ENCODE measurements at regions of chr14 and their contacts with region 1.

Region 1: DNA sequence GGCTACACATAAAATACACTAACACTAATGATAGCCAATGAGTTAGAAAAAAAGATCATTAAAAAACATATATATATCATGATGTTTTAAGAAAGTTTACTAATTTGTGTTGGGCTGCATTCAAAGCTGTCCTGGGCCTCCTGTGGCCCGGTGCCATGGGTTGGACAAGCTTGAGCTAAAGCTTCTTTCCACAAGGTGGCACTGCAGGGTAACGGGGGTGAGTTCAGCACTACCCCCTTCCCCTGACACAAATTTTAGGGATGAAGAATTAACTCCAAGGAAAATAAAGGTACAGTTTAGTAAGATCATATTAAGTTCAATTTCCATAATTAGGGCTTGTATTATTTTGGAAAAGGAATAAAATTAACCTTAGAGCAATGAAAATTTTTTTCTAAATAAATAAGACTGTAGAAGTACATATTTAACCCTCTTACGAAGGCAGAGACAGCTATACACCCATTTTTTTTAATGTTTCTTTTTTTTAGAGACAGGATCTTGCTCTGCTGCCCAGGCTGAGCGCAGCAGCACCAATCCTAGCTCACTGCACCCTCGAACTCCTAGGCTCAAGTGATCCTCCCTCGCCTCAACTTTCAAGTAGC is 38.9 kb downstream of the PPP1R13B start:
- DNase-seq: peak; percentile 28 to 80 (median 73)
- ATAC-seq: peak; percentile 78
- H3K4me3 ChIP-seq: no peak overlapping the region
- H3K4me3 Mint-ChIP-seq: no peak overlapping the region
- H3K27ac ChIP-seq: no peak overlapping the region
- H3K27ac Mint-ChIP-seq: no peak overlapping the region
- H3K4me1 ChIP-seq: no peaks in the 10 kb centered on the region
- H3K4me1 Mint-ChIP-seq: peaks cover 15% of the 10 kb centered on the region
- H3K27me3 ChIP-seq: no peaks in the 10 kb centered on the region
- H3K27me3 Mint-ChIP-seq: no peaks in the 10 kb centered on the region
- CTCF ChIP-seq: peak; percentile 96

Region 2: GRCh38 chr14:103770902-103771301 is 37.6 kb before region 1 on chr14:
- CTCF ChIA-PET with region 1: no interaction called
- POLR2A ChIA-PET with region 1: no interaction called
- intact Hi-C with region 1: no loop called
- DNase-seq: no peak
- ATAC-seq: no peak
- H3K4me3 ChIP-seq: no peak overlapping the region
- H3K4me3 Mint-ChIP-seq: no peak overlapping the region
- H3K27ac ChIP-seq: no peak overlapping the region
- H3K27ac Mint-ChIP-seq: no peak overlapping the region
- H3K4me1 ChIP-seq: no peaks in the 10 kb centered on the region
- H3K4me1 Mint-ChIP-seq: no peaks in the 10 kb centered on the region
- H3K27me3 ChIP-seq: no peaks in the 10 kb centered on the region
- H3K27me3 Mint-ChIP-seq: no peaks in the 10 kb centered on the region
- CTCF ChIP-seq: no peak

Region 3: GRCh38 chr14:103782376-103782775 is 26.1 kb before region 1 on chr14:
- CTCF ChIA-PET with region 1: no interaction called
- POLR2A ChIA-PET with region 1: no interaction called
- intact Hi-C with region 1: loop called in 1 of 2 experiments (anchors 1 kb)
- DNase-seq: no peak
- ATAC-seq: no peak
- H3K4me3 ChIP-seq: no peak overlapping the region
- H3K4me3 Mint-ChIP-seq: no peak overlapping the region
- H3K27ac ChIP-seq: no peak overlapping the region
- H3K27ac Mint-ChIP-seq: no peak overlapping the region
- H3K4me1 ChIP-seq: no peaks in the 10 kb centered on the region
- H3K4me1 Mint-ChIP-seq: no peaks in the 10 kb centered on the region
- H3K27me3 ChIP-seq: no peaks in the 10 kb centered on the region
- H3K27me3 Mint-ChIP-seq: no peaks in the 10 kb centered on the region
- CTCF ChIP-seq: no peak

Region 4: GRCh38 chr14:103847451-103848188 is 39.1 kb after region 1 on chr14 and contains the start of gene PPP1R13B:
- CTCF ChIA-PET with region 1: interaction called, 6 read pairs
- POLR2A ChIA-PET with region 1: no interaction called
- intact Hi-C with region 1: loop called in 1 of 2 experiments (anchors 5 kb)
- DNase-seq: peak; percentile 88 to 97 (median 92)
- ATAC-seq: peak; percentile 98
- H3K4me3 ChIP-seq: peak within 1 kb of the TSS; percentile 65 to 73
- H3K4me3 Mint-ChIP-seq: peak within 1 kb of the TSS; percentile 90
- H3K27ac ChIP-seq: peak within 1 kb of the TSS in 1 of 2 experiments; percentile 27
- H3K27ac Mint-ChIP-seq: peak within 1 kb of the TSS; percentile 74
- H3K4me1 ChIP-seq: peaks cover 14% of the 10 kb centered on the region
- H3K4me1 Mint-ChIP-seq: peaks cover 20% of the 10 kb centered on the region
- H3K27me3 ChIP-seq: no peaks in the 10 kb centered on the region
- H3K27me3 Mint-ChIP-seq: no peaks in the 10 kb centered on the region
- CTCF ChIP-seq: no peak
- total RNA-seq, gene PPP1R13B: 20.9 to 22.6 TPM

Region 5: GRCh38 chr14:103897075-103897947 is 88.8 kb after region 1 on chr14:
- CTCF ChIA-PET with region 1: interaction called, 20 read pairs
- POLR2A ChIA-PET with region 1: no interaction called
- intact Hi-C with region 1: no loop called
- DNase-seq: no peak
- ATAC-seq: no peak
- H3K4me3 ChIP-seq: no peak overlapping the region
- H3K4me3 Mint-ChIP-seq: no peak overlapping the region
- H3K27ac ChIP-seq: no peak overlapping the region
- H3K27ac Mint-ChIP-seq: no peak overlapping the region
- H3K4me1 ChIP-seq: peaks cover 4% of the 10 kb centered on the region
- H3K4me1 Mint-ChIP-seq: peaks cover 5% of the 10 kb centered on the region
- H3K27me3 ChIP-seq: no peaks in the 10 kb centered on the region
- H3K27me3 Mint-ChIP-seq: peaks cover 2% of the 10 kb centered on the region
- CTCF ChIP-seq: no peak

Region 6: DNA sequence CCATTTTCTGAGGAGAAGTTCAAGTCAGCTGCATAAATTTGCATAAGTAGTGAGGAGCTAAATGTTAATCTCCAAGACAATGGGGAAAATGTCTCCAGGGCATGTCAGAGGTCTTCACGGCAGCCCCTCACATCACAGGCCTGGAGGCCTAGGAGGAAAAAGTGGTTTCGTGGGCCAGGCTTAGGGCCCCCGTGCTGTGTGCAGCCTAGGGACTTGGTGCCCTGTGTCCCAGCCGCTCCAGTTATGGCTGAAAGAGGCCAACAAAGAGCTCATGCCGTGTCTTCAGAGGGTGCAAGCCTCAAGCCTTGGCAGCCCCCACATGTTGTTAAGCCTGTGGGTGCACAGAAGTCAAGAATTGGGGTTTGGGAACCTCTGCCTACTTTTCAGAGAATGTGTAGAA is 175.7 kb after region 1 on chr14:
- CTCF ChIA-PET with region 1: interaction called, 12 read pairs
- POLR2A ChIA-PET with region 1: no interaction called
- intact Hi-C with region 1: loop called in 1 of 2 experiments (anchors 5 kb)
- DNase-seq: no peak
- ATAC-seq: no peak
- H3K4me3 ChIP-seq: no peak overlapping the region
- H3K4me3 Mint-ChIP-seq: no peak overlapping the region
- H3K27ac ChIP-seq: no peak overlapping the region
- H3K27ac Mint-ChIP-seq: no peak overlapping the region
- H3K4me1 ChIP-seq: no peaks in the 10 kb centered on the region
- H3K4me1 Mint-ChIP-seq: no peaks in the 10 kb centered on the region
- H3K27me3 ChIP-seq: no peaks in the 10 kb centered on the region
- H3K27me3 Mint-ChIP-seq: peaks cover 18% of the 10 kb centered on the region
- CTCF ChIP-seq: no peak

Region 7: GRCh38 chr14:104563742-104564615 is 755.5 kb after region 1 on chr14:
- CTCF ChIA-PET with region 1: no interaction called
- POLR2A ChIA-PET with region 1: no interaction called
- intact Hi-C with region 1: loop called in 1 of 2 experiments (anchors 10 kb)
- DNase-seq: peak; percentile 48 to 82 (median 71)
- ATAC-seq: peak; percentile 71
- H3K4me3 ChIP-seq: no peak overlapping the region
- H3K4me3 Mint-ChIP-seq: no peak overlapping the region
- H3K27ac ChIP-seq: no peak overlapping the region
- H3K27ac Mint-ChIP-seq: no peak overlapping the region
- H3K4me1 ChIP-seq: no peaks in the 10 kb centered on the region
- H3K4me1 Mint-ChIP-seq: no peaks in the 10 kb centered on the region
- H3K27me3 ChIP-seq: peaks cover 0 to 3% of the 10 kb centered on the region in 2 experiments
- H3K27me3 Mint-ChIP-seq: peaks cover 15% of the 10 kb centered on the region
- CTCF ChIP-seq: peak; percentile 72

Measured in CD8-positive, alpha-beta T cell (primary cell).